Motor neuron (in vitro differentiated cells): ENCODE measurements at regions of chr12 and their contacts with region 1.

Region 1: GRCh38 chr12:76031537-76032073 is at the start of gene PHLDA1:
- ATAC-seq: peak; percentile 75 to 87 (median 86)
- H3K4me3 ChIP-seq: peak within 1 kb of the TSS; percentile 53 to 91 (median 60)
- H3K27ac ChIP-seq: peak within 1 kb of the TSS; percentile 83 to 84
- H3K4me1 ChIP-seq: peaks cover 14 to 19% of the 10 kb centered on the region in 2 donors
- total RNA-seq, gene PHLDA1: 2.7 to 69.4 (median 16.5) TPM

Region 2: GRCh38 chr12:75526655-75527511 is 504.7 kb before region 1 on chr12:
- in situ Hi-C with region 1: loop called in 8 of 9 experiments (anchors 10 to 25 kb)
- ATAC-seq: peak; percentile 49 to 80 (median 78)
- H3K4me3 ChIP-seq: no peak overlapping the region
- H3K27ac ChIP-seq: no peak overlapping the region
- H3K4me1 ChIP-seq: peaks cover 4 to 9% of the 10 kb centered on the region in 2 donors

Region 3: GRCh38 chr12:75533239-75533638 is 498.4 kb before region 1 on chr12:
- in situ Hi-C with region 1: loop called in 8 of 9 experiments (anchors 10 to 25 kb)
- ATAC-seq: no peak
- H3K4me3 ChIP-seq: no peak overlapping the region
- H3K27ac ChIP-seq: no peak overlapping the region
- H3K4me1 ChIP-seq: peaks cover 0 to under 1% of the 10 kb centered on the region in 2 donors

Region 4: GRCh38 chr12:75560167-75560566 is 471.4 kb before region 1 on chr12:
- in situ Hi-C with region 1: loop called in 1 of 9 experiments (anchors 25 kb)
- ATAC-seq: peak; percentile 40 to 93 (median 84)
- H3K4me3 ChIP-seq: no peak overlapping the region
- H3K27ac ChIP-seq: no peak overlapping the region
- H3K4me1 ChIP-seq: peaks cover 0 to 3% of the 10 kb centered on the region in 2 donors